Naive thymus-derived CD4-positive, alpha-beta T cell (primary cell): ENCODE measurements at regions of chr11 and their contacts with region 1.

Region 1: DNA sequence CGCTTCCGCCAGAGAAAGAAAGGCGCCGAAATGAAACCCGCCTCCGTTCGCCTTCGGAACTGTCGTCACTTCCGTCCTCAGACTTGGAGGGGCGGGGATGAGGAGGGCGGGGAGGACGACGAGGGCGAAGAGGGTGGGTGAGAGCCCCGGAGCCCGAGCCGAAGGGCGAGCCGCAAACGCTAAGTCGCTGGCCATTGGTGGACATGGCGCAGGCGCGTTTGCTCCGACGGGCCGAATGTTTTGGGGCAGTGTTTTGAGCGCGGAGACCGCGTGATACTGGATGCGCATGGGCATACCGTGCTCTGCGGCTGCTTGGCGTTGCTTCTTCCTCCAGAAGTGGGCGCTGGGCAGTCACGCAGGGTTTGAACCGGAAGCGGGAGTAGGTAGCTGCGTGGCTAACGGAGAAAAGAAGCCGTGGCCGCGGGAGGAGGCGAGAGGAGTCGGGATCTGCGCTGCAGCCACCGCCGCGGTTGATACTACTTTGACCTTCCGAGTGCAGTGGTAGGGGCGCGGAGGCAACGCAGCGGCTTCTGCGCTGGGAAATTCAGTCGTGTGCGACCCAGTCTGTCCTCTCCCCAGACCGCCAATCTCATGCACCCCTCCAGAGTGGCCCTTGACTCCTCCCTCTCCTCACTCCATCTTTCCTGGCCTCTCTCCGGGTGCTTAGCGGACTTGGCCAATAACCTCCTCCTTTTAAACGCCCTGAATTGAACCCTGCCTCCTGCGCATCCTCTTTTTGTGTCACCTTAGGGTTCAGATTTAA is at the start of gene ATM:
- DNase-seq: peak; percentile 94 to 99 (median 98)
- ATAC-seq: peak; percentile 91
- H3K4me3 ChIP-seq: peak within 1 kb of the TSS; percentile 93
- H3K4me3 Mint-ChIP-seq: no peak within 1 kb of the TSS
- H3K27ac ChIP-seq: peak within 1 kb of the TSS; percentile 98
- H3K27ac Mint-ChIP-seq: no peak within 1 kb of the TSS
- H3K4me1 ChIP-seq: peaks cover 26 to 31% of the 10 kb centered on the region in 2 donors
- H3K4me1 Mint-ChIP-seq: peaks cover 32 to 57% (median 37%) of the 10 kb centered on the region in 7 donors
- H3K27me3 ChIP-seq: no peaks in the 10 kb centered on the region
- H3K27me3 Mint-ChIP-seq: no peaks in the 10 kb centered on the region
- total RNA-seq, gene ATM: 183 to 879 (median 440) TPM

Region 2: GRCh38 chr11:106969644-106970355 is 1253.1 kb before region 1 on chr11:
- CTCF ChIA-PET with region 1: no interaction called
- POLR2A ChIA-PET with region 1: no interaction called
- intact Hi-C with region 1: no loop called
- DNase-seq: no peak
- ATAC-seq: no peak
- H3K4me3 ChIP-seq: no peak overlapping the region
- H3K4me3 Mint-ChIP-seq: no peak overlapping the region
- H3K27ac ChIP-seq: no peak overlapping the region
- H3K27ac Mint-ChIP-seq: no peak overlapping the region
- H3K4me1 ChIP-seq: no peaks in the 10 kb centered on the region
- H3K4me1 Mint-ChIP-seq: no peaks in the 10 kb centered on the region
- H3K27me3 ChIP-seq: no peaks in the 10 kb centered on the region
- H3K27me3 Mint-ChIP-seq: peaks cover 0 to 4% (median 0%) of the 10 kb centered on the region in 5 donors

Region 3: DNA sequence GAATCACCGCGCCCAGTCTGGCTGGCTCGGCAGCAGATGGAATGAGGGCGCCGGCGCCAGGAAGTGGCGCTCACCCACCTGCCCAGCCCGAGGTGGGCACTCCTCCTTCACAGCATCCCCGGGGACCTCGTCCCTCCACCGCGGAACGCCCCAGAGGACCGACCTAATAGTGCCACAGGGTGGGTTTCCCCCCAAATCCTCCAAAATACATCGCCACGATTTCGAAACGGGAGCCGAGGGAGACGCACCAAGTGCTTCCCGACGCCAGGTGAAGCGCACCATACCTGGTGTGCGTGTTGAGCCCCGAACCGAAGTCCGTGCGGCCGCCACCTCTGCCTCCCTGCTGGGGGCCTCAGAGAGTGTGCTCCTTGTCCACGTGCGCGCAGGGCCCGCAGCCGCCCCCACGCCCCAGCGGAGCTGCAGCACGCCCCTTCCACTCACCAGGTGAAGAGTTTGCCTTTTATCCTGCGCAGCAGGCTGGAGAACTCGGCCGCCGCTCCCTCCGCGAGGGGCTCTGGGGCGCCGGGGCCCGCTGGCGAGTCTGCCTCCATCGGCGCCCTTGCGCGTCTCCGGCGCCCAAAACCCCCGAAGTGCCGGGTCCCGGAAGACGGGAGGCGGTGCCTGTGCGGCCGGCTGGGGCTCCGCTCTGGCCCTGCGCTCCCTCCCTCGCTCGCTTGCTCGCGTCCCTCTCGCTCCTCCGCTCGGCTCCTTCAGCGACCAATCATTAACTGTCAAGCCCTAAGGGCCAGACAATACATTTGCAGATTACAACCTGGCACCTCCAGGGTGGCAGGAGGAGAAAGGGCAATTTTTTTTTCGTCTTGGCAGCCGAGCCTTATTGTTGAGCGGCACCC is 364.4 kb before region 1 on chr11 and contains the start of gene SLC35F2:
- CTCF ChIA-PET with region 1: no interaction called
- POLR2A ChIA-PET with region 1: no interaction called
- intact Hi-C with region 1: loop called in 1 of 2 experiments (anchors 10 kb)
- DNase-seq: peak; percentile 15 to 81 (median 45)
- ATAC-seq: peak; percentile 88
- H3K4me3 ChIP-seq: peak within 1 kb of the TSS; percentile 88
- H3K4me3 Mint-ChIP-seq: peak within 1 kb of the TSS; percentile 89 to 98 (median 95)
- H3K27ac ChIP-seq: peak within 1 kb of the TSS; percentile 65
- H3K27ac Mint-ChIP-seq: peak within 1 kb of the TSS; percentile 21 to 88 (median 77)
- H3K4me1 ChIP-seq: no peaks in the 10 kb centered on the region
- H3K4me1 Mint-ChIP-seq: peaks cover 5 to 33% (median 26%) of the 10 kb centered on the region in 7 donors
- H3K27me3 ChIP-seq: no peaks in the 10 kb centered on the region
- H3K27me3 Mint-ChIP-seq: peaks cover 0 to 17% (median 4%) of the 10 kb centered on the region in 5 donors
- total RNA-seq, gene SLC35F2: 3.8 to 8.9 (median 4.5) TPM

Region 4: DNA sequence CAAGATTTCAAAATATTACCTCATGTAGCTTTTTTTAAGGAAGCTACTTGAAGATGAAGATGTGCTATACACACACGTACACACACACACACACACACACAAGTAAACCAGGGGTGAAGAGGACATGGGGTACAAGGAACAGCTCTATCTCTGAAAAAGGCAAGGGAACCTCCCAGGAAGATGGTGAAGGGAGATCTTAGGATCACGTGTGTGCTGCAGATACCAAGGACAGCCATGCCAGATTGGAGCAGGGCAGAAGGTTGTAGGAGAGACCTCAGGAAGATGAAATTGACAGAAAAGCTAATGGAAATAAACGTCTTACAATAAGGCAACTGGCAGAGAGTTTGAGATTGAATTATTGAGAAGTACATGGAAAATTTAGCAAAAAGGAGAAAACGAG is 275.0 kb before region 1 on chr11:
- CTCF ChIA-PET with region 1: no interaction called
- POLR2A ChIA-PET with region 1: no interaction called
- intact Hi-C with region 1: no loop called
- DNase-seq: no peak
- ATAC-seq: no peak
- H3K4me3 ChIP-seq: no peak overlapping the region
- H3K4me3 Mint-ChIP-seq: no peak overlapping the region
- H3K27ac ChIP-seq: no peak overlapping the region
- H3K27ac Mint-ChIP-seq: no peak overlapping the region
- H3K4me1 ChIP-seq: no peaks in the 10 kb centered on the region
- H3K4me1 Mint-ChIP-seq: peaks cover 0 to 1% (median 0%) of the 10 kb centered on the region in 7 donors
- H3K27me3 ChIP-seq: no peaks in the 10 kb centered on the region
- H3K27me3 Mint-ChIP-seq: peaks cover under 1 to 14% (median 8%) of the 10 kb centered on the region in 5 donors

Region 5: DNA sequence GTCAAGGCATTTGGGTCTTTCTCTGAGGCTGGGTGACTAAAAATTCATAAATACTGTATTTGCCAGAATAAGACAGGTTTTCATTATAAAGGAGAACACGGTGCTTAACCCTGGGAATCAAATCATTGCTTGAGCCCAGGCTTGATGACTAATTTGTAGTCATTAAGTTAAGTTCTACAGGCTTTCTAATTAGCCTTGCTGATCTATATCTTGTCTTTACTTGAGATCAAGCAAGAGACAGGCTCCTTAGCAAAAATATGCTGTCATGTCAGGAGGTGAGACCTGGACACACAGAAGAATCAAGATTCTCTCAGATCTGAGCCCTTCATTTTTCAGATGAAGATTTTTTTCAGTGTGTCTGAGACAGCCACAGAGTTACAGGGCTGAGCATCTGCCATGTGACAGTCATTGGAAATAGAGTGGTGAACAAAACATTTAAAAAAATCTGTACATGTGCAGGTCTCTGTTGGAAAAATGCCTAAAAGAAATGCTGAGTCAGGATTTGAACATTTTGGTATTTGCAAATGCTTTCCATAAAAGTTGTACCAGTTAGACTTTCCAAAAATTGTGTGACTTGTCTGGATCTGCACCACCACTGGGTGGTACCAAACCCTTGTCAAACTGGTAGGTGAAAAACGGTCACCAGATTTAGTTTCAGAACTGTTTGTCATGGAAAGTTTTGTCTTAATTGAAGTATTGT is 86.9 kb before region 1 on chr11:
- CTCF ChIA-PET with region 1: interaction called, 3 read pairs
- POLR2A ChIA-PET with region 1: no interaction called
- intact Hi-C with region 1: loop called (anchors 1 to 5 kb)
- DNase-seq: peak in 6 of 9 donors; percentile 11 to 38 (median 29)
- ATAC-seq: peak; percentile 54
- H3K4me3 ChIP-seq: no peak overlapping the region
- H3K4me3 Mint-ChIP-seq: no peak overlapping the region
- H3K27ac ChIP-seq: no peak overlapping the region
- H3K27ac Mint-ChIP-seq: peak overlapping the region in 6 of 9 donors; percentile 16 to 72 (median 43)
- H3K4me1 ChIP-seq: no peaks in the 10 kb centered on the region
- H3K4me1 Mint-ChIP-seq: peaks cover 0 to 20% (median 11%) of the 10 kb centered on the region in 7 donors
- H3K27me3 ChIP-seq: no peaks in the 10 kb centered on the region
- H3K27me3 Mint-ChIP-seq: no peaks in the 10 kb centered on the region

Region 6: DNA sequence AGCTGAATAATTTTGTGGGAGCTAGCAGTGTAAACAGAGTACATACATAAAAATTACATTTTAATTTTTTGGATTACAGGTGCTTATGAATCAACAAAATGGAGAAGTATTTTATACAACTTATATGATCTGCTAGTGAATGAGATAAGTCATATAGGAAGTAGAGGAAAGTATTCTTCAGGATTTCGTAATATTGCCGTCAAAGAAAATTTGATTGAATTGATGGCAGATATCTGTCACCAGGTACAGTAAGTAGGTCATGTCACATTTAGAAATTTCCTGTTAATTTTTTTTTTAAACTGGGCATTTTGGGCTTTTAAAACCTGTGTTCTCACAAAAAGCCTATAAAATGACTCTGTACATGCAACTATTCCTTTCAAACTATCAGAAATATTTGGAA is 24.0 kb after region 1 on chr11:
- CTCF ChIA-PET with region 1: interaction called, 104 read pairs
- POLR2A ChIA-PET with region 1: interaction called, 779 read pairs
- intact Hi-C with region 1: no loop called
- DNase-seq: no peak
- ATAC-seq: no peak
- H3K4me3 ChIP-seq: no peak overlapping the region
- H3K4me3 Mint-ChIP-seq: peak overlapping the region in 6 of 10 donors; percentile 0 to 72 (median 44)
- H3K27ac ChIP-seq: peak overlapping the region; percentile 48
- H3K27ac Mint-ChIP-seq: peak overlapping the region in 8 of 9 donors; percentile 48 to 91 (median 82)
- H3K4me1 ChIP-seq: peaks cover 38 to 71% of the 10 kb centered on the region in 2 donors
- H3K4me1 Mint-ChIP-seq: peaks cover 25 to 95% (median 89%) of the 10 kb centered on the region in 7 donors
- H3K27me3 ChIP-seq: no peaks in the 10 kb centered on the region
- H3K27me3 Mint-ChIP-seq: no peaks in the 10 kb centered on the region

Region 7: DNA sequence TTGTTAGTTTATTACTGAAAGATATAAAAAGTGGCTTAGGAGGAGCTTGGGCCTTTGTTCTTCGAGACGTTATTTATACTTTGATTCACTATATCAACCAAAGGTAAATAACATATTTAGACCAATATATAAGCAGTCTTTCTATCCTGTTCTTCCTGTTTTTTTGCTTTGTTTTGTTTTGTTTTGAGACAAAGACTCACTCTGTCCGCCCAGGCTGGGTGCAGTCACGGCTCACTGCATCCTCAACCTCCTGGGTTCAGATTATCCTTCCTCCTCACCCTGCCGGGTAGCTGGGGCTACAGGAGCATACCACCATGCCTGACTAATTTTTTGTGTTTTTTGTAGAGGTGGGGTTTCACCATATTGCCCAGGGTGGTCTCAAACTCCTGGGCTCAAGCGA is 66.8 kb after region 1 on chr11:
- CTCF ChIA-PET with region 1: no interaction called
- POLR2A ChIA-PET with region 1: interaction called, 11 read pairs
- intact Hi-C with region 1: loop called in 1 of 2 experiments (anchors 2 kb)
- DNase-seq: no peak
- ATAC-seq: no peak
- H3K4me3 ChIP-seq: no peak overlapping the region
- H3K4me3 Mint-ChIP-seq: peak overlapping the region in 1 of 10 donors; percentile 21
- H3K27ac ChIP-seq: no peak overlapping the region
- H3K27ac Mint-ChIP-seq: peak overlapping the region in 8 of 9 donors; percentile 23 to 85 (median 70)
- H3K4me1 ChIP-seq: no peaks in the 10 kb centered on the region
- H3K4me1 Mint-ChIP-seq: peaks cover 0 to 44% (median 23%) of the 10 kb centered on the region in 7 donors
- H3K27me3 ChIP-seq: no peaks in the 10 kb centered on the region
- H3K27me3 Mint-ChIP-seq: no peaks in the 10 kb centered on the region

Region 8: DNA sequence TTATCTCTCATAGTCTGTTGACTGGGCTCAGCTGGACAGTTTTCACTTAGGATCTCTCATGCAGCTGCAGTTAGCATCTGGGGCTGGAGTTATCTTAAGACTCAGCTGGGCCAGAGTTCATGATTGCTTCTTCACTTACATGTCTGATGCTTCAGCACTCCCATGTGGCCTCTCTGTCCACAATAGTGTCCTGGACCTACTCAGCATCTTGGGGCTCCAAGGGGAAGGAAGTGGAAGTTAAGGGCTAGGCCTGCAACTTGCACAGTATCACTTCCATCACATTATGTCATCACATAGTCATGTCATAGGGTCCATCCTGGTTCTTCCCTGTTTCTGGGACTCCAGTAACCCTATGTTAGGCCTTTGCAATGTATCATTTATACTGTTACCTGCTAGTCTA is 128.6 kb after region 1 on chr11:
- CTCF ChIA-PET with region 1: no interaction called
- POLR2A ChIA-PET with region 1: no interaction called
- intact Hi-C with region 1: no loop called
- DNase-seq: no peak
- ATAC-seq: no peak
- H3K4me3 ChIP-seq: no peak overlapping the region
- H3K4me3 Mint-ChIP-seq: no peak overlapping the region
- H3K27ac ChIP-seq: no peak overlapping the region
- H3K27ac Mint-ChIP-seq: peak overlapping the region in 5 of 9 donors; percentile 17 to 79 (median 56)
- H3K4me1 ChIP-seq: no peaks in the 10 kb centered on the region
- H3K4me1 Mint-ChIP-seq: peaks cover 0 to 11% (median 5%) of the 10 kb centered on the region in 7 donors
- H3K27me3 ChIP-seq: no peaks in the 10 kb centered on the region
- H3K27me3 Mint-ChIP-seq: no peaks in the 10 kb centered on the region

Region 9: GRCh38 chr11:108497317-108498045 is 274.6 kb after region 1 on chr11:
- CTCF ChIA-PET with region 1: no interaction called
- POLR2A ChIA-PET with region 1: no interaction called
- intact Hi-C with region 1: loop called (anchors 1 kb)
- DNase-seq: peak in 8 of 9 donors; percentile 68 to 83 (median 76)
- ATAC-seq: peak; percentile 92
- H3K4me3 ChIP-seq: peak overlapping the region; percentile 77
- H3K4me3 Mint-ChIP-seq: peak overlapping the region; percentile 95 to 100 (median 98)
- H3K27ac ChIP-seq: peak overlapping the region; percentile 87
- H3K27ac Mint-ChIP-seq: peak overlapping the region; percentile 95 to 100 (median 99)
- H3K4me1 ChIP-seq: peaks cover 0 to 3% of the 10 kb centered on the region in 2 donors
- H3K4me1 Mint-ChIP-seq: peaks cover 8 to 33% (median 24%) of the 10 kb centered on the region in 7 donors
- H3K27me3 ChIP-seq: no peaks in the 10 kb centered on the region
- H3K27me3 Mint-ChIP-seq: no peaks in the 10 kb centered on the region